Activated CD4-positive, alpha-beta T cell treated with anti-CD3 and anti-CD28 coated beads, Interleukin-2, amount 10 ng/mL, durations not matched to agents 24 days and 14 days (primary cell): ENCODE measurements at regions of chr10 and their contacts with region 1.

Region 1: GRCh38 chr10:62183442-62183841 is 85.2 kb downstream of the RTKN2 start:
- DNase-seq: peak; percentile 90
- H3K4me3 Mint-ChIP-seq: peak overlapping the region; percentile 41
- H3K27ac Mint-ChIP-seq: peak overlapping the region; percentile 92
- H3K4me1 Mint-ChIP-seq: peaks cover 68% of the 10 kb centered on the region
- H3K27me3 Mint-ChIP-seq: no peaks in the 10 kb centered on the region

Region 2: DNA sequence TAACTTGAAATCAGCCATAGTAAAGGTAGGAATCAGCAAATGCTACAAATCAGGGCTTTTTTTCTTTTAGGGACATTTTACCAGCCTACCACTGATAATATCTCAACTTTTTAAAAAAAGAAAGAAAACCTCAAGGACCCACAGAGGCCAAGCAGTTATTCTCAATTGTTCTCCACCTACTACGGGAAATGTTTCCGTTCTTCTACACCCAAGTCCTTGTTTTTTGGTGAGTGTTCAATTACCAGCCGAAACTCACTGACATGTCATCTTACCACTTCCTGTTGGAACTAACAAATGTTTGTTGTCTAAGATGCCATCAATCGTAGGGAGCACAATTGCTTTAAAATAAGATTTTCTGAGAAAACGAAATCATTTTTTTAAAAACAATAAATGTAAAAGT is 1455.4 kb before region 1 on chr10:
- intact Hi-C with region 1: loop called (anchors 10 kb)
- DNase-seq: peak; percentile 87
- H3K4me3 Mint-ChIP-seq: peak overlapping the region; percentile 84
- H3K27ac Mint-ChIP-seq: peak overlapping the region; percentile 88
- H3K4me1 Mint-ChIP-seq: peaks cover 71% of the 10 kb centered on the region
- H3K27me3 Mint-ChIP-seq: no peaks in the 10 kb centered on the region

Region 3: DNA sequence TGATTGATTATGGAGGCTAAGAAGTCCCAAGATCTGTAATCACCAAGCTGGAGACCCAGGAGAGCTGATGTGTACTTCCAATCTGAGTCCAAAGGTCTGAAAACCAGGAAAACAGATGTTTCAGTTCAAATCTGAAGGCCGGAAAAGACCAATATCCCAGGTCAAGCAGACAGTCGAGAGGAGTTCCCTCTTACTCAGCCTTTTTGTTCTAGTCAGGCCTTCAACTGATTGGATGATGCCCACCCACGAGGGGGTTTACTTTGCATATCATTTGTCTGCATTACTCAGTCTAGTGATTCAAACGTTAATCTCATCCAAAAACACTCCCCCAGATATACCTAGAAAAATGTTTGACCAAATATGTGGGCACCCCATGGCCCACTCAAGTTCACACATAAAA is 289.3 kb before region 1 on chr10:
- intact Hi-C with region 1: no loop called
- DNase-seq: no peak
- H3K4me3 Mint-ChIP-seq: no peak overlapping the region
- H3K27ac Mint-ChIP-seq: no peak overlapping the region
- H3K4me1 Mint-ChIP-seq: peaks cover 27% of the 10 kb centered on the region
- H3K27me3 Mint-ChIP-seq: no peaks in the 10 kb centered on the region

Region 4: GRCh38 chr10:61943674-61944410 is 239.6 kb before region 1 on chr10:
- intact Hi-C with region 1: loop called (anchors 1 kb)
- DNase-seq: peak; percentile 73
- H3K4me3 Mint-ChIP-seq: peak overlapping the region; percentile 82
- H3K27ac Mint-ChIP-seq: peak overlapping the region; percentile 93
- H3K4me1 Mint-ChIP-seq: peaks cover 49% of the 10 kb centered on the region
- H3K27me3 Mint-ChIP-seq: no peaks in the 10 kb centered on the region

Region 5: GRCh38 chr10:62050893-62051433 is 132.5 kb before region 1 on chr10:
- intact Hi-C with region 1: loop called (anchors 1 kb)
- DNase-seq: peak; percentile 93
- H3K4me3 Mint-ChIP-seq: peak overlapping the region; percentile 97
- H3K27ac Mint-ChIP-seq: peak overlapping the region; percentile 99
- H3K4me1 Mint-ChIP-seq: peaks cover 79% of the 10 kb centered on the region
- H3K27me3 Mint-ChIP-seq: no peaks in the 10 kb centered on the region

Region 6: GRCh38 chr10:62205750-62206399 is 22.4 kb after region 1 on chr10:
- intact Hi-C with region 1: no loop called
- DNase-seq: no peak
- H3K4me3 Mint-ChIP-seq: no peak overlapping the region
- H3K27ac Mint-ChIP-seq: no peak overlapping the region
- H3K4me1 Mint-ChIP-seq: no peaks in the 10 kb centered on the region
- H3K27me3 Mint-ChIP-seq: no peaks in the 10 kb centered on the region

Region 7: DNA sequence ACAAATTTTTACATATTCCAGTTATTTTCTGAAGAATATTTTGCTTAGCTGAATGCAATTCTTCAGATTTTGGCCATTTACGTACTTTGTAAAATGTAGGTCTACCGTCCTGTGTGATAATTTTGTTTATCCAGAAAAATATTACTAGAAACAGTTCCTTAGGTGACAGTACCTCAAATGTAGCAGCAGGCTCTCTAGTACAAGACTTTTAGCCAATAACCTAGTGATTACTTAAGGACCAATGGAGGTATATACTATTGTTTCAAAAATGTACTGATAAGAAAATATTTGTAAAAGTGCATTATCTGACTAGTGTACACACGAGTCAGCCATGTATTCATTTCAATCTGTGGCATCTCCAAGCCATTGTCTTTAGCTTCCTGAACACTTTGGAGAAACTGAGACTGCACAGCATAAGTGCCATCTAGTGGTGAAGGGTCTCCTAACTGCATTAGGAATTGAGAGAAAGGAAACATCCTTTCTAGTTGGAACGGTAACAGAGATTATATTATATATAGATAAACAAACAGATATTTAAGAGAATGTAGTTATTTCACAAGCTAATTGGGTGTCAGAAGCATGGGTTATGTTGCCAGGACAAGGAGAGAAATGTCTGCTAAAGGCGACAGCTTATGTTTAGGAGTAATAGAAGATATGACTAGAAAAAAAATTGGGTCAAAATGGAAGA is 61.5 kb after region 1 on chr10:
- intact Hi-C with region 1: loop called (anchors 1 kb)
- DNase-seq: peak; percentile 90
- H3K4me3 Mint-ChIP-seq: peak overlapping the region; percentile 69
- H3K27ac Mint-ChIP-seq: peak overlapping the region; percentile 82
- H3K4me1 Mint-ChIP-seq: peaks cover 36% of the 10 kb centered on the region
- H3K27me3 Mint-ChIP-seq: no peaks in the 10 kb centered on the region

Region 8: DNA sequence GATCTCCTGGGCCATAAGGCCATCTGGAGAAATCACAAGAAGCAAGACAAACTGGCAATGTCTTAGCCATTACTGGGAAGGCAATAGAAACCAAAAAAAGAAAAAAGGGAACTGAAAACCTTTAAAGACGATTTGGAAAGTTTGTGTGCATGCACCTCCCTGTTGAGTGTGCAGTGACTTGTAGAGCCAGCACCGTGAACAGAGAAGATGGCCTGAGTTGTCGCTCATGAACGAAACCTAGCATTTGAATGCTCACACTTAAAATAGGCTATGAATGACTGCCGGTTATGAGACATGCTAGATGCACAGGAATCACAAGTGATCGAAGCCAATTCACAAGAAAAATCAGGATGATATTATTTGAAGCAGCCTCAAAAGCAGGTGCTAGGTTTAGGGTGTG is 469.8 kb after region 1 on chr10:
- intact Hi-C with region 1: no loop called
- DNase-seq: no peak
- H3K4me3 Mint-ChIP-seq: no peak overlapping the region
- H3K27ac Mint-ChIP-seq: no peak overlapping the region
- H3K4me1 Mint-ChIP-seq: peaks cover 32% of the 10 kb centered on the region
- H3K27me3 Mint-ChIP-seq: no peaks in the 10 kb centered on the region

Region 9: DNA sequence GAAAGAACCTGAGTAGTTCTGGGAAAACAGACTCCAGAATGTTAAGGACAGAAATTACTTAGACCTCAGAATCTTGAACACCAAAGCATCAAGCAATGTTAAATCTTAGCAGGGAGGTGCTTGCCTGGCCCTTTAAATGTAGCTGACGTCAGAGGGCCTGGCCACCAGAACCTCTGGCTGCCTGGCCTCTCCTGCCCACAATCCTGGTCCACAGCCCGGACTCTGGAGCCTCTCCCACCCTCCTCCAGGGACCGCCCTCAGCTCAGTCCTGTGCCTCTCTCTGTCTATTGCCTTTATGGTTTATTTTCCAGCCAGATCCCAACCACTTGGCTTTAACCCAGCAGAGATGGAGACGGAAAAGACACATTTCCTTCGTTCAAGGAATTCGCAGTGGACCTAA is 674.9 kb after region 1 on chr10:
- intact Hi-C with region 1: loop called (anchors 5 kb)
- DNase-seq: no peak
- H3K4me3 Mint-ChIP-seq: no peak overlapping the region
- H3K27ac Mint-ChIP-seq: no peak overlapping the region
- H3K4me1 Mint-ChIP-seq: peaks cover 60% of the 10 kb centered on the region
- H3K27me3 Mint-ChIP-seq: peaks cover 4% of the 10 kb centered on the region